Keratinocyte (primary cell): ENCODE measurements at regions of chr2 and their contacts with region 1.

Region 1: GRCh38 chr2:111900859-111901258 is 2.5 kb downstream of the MERTK start:
- DNase-seq: no peak
- H3K4me3 ChIP-seq: no peak overlapping the region
- H3K27ac ChIP-seq: no peak overlapping the region
- H3K4me1 ChIP-seq: peaks cover 16% of the 10 kb centered on the region
- H3K27me3 ChIP-seq: peaks cover 47% of the 10 kb centered on the region
- CTCF ChIP-seq: peak in 2 of 3 experiments; percentile 41 to 52

Region 2: DNA sequence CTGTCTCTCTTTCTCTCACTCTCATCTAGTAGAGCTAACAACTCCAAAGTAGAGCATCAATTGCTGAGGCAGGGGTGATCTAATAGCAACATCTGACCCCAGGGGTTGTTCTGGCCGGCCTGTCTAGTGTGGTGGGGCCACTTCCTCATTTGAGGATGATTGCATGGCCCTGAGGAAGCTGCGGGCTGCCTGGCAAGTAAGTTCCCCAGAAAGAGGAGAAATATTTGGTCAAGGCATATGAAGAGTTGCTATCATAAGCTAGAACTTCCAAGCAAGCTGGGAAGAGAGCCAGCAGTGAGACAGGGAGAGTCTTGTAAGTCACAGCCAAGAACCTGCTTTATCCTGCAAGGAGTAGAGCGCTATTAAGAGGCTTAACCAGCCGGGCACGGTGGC is 103.4 kb after region 1 on chr2:
- dilution Hi-C with region 1: loop called (anchors 25 kb)
- DNase-seq: no peak
- H3K4me3 ChIP-seq: no peak overlapping the region
- H3K27ac ChIP-seq: no peak overlapping the region
- H3K4me1 ChIP-seq: peaks cover 8% of the 10 kb centered on the region
- H3K27me3 ChIP-seq: peaks cover 14% of the 10 kb centered on the region
- CTCF ChIP-seq: no peak